Left colon (tissue), 2 donors: ENCODE measurements at regions of chr13 and their contacts with region 1.

Region 1: DNA sequence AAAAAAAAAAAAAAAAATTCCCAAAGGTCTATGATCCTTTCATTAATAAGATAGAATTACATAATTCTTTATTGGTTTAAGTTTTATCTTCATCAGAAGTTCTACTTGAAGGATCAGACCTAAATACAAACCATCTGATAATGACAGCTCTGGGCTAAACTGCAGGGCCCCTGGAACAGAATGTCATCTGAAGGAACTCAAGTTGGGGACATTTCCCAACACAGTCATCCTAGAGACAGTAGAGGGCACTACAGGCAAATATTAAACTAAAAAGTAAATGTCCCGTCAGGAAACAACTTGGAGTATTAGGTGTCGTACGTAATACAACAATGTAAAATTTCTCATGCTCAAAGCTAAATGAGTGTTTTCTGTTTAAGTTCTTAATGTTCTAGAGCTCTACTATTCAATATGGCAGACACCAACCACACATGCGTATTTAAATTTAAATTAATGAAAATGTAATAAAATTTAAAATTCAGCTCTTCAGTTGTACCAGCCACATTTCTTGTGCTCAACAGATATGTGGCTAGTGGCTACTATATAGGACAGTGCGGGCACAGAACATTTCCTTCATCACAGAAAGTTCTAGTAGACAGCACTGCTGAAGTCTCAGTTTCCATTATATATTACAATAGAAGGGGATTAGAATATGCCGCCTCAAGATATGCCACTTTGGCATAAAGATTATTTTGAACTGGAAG is 21.8 kb upstream of the NAXD start:
- DNase-seq: no peak
- ATAC-seq: peak; percentile 94

Region 2: DNA sequence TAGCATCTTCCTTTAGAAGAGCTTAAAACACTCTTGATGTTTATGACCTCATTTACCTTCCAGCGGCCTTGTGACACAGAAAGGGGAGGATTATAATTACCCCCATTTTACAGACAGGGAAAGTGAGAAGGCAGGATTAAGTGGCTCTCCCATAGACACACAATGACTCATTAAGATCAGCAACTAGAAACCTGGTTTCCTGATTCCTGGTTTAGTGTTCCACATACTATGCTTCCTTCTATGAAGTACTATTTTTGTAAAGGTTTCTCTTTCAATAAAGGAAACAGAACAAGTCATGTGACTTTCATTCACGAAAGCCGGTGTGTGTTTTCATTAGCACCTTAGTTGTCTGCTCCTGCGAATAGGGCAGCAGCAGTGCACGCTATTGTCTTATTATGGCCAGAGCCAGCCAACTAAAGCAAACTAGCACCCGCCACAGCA is 815.5 kb before region 1 on chr13:
- intact Hi-C with region 1: no loop called
- DNase-seq: no peak
- ATAC-seq: peak; percentile 88

Region 3: DNA sequence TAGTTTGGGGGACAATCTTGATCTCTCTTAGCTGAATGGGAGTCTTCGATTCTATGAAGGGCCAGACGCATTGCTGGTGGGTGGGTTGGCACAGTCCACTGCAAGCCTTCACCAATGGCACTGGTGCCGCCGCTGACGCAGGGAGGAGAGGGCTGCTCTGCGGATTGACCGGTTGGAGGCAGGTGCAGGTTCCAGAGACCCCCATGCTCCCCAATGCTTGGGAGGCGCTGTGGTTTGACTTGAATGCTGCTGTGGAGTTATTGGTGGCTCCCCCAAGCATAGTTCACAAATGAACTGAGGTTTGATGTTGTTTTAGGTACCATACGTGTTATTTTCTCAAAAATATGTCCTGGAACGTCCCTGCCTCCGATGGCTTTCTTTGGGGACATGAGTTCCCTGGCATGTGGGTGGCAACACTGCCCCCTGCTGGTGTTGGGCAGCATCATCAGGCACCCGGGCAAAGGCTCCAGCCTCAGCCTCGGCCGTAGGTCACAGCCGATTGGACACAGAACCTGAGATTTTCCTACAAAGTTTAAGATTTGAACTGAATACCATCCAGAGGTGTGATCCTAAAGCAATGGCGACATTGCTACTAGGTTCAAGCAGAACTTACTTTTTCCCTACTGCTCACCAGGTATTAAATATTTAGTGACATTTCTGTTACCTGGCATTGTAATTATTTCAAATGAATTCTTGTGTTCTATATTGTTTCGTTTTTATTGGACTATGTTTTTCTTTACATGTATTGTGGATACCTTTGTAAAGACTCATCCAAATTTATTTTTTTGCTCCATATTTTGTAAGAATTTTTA is 225.8 kb after region 1 on chr13:
- intact Hi-C with region 1: loop called in 1 of 2 experiments (anchors 2 kb)
- DNase-seq: peak; percentile 61 to 78
- ATAC-seq: peak; percentile 91